Brain microvascular endothelial cell (primary cell): ENCODE measurements at regions of chr21 and their contacts with region 1.

Region 1: GRCh38 chr21:44854664-44855446 is 18.6 kb downstream of the PTTG1IP start:
- DNase-seq: no peak
- H3K4me3 ChIP-seq: no peak overlapping the region
- H3K27ac ChIP-seq: no peak overlapping the region
- H3K27me3 ChIP-seq: no peaks in the 10 kb centered on the region
- CTCF ChIP-seq: no peak

Region 2: GRCh38 chr21:44697811-44698734 is 156.8 kb before region 1 on chr21:
- in situ Hi-C with region 1: no loop called
- DNase-seq: no peak
- H3K4me3 ChIP-seq: no peak overlapping the region
- H3K27ac ChIP-seq: no peak overlapping the region
- H3K27me3 ChIP-seq: peaks cover 52% of the 10 kb centered on the region
- CTCF ChIP-seq: no peak

Region 3: DNA sequence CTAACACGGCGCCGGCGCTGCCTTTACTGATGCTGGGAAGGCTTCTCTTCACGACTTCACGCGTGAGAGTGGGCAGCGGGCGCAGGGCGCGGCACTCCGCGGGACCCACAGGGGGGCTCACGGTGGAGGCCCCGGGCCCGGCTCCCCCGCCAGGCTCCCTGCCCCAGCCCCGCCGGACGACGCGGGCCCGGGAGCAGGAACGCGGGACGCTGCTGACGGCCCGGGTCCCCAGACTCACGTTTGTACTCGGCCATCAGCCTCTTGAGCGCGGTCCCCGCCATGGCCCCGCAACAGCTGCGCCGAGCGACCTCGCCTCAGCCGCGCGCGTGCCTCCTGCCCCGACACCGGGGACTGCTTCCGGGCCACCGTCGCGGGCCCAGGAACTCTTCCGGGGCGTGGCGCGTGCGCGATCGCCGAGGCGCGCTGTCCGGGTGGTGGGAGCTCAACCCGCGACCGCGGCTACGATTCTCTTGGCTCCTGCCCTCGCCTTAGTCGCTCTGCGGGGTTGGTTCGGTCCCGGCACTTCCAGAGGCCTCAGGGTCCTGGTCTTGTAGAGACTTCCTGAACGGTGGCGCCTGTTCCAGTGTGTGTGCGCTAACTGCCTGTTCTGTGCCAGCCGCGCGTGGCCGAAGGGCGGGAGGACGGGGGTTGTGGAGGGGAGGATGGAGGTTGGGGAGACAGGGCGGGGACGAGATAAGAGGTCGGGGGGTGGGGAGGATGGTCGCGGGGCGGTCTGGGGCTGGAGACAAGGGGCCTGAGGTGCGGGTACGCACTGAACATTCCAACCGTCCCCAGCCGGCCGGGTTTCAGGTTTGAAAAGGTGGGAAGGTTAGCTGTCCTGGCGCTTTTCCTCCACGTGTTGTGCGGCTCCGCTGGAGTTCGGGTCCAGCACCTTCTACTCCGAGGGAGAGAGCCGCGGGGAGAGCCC is 53.1 kb before region 1 on chr21 and contains the start of gene UBE2G2:
- in situ Hi-C with region 1: loop called (anchors 10 kb)
- DNase-seq: peak; percentile 44
- H3K4me3 ChIP-seq: peak within 1 kb of the TSS; percentile 86
- H3K27ac ChIP-seq: peak within 1 kb of the TSS; percentile 31
- H3K27me3 ChIP-seq: no peaks in the 10 kb centered on the region
- CTCF ChIP-seq: no peak